ENCODE measurements at regions of chr1 and their contacts with region 1.

Region 1: GRCh38 chr1:208652296-208653160 is 408.3 kb upstream of the PLXNA2 start:
- DNase-seq: peak; percentile 21 to 87 (median 61)
- H3K4me3 ChIP-seq: no peak overlapping the region
- H3K27ac ChIP-seq: no peak overlapping the region
- H3K4me1 ChIP-seq: no peaks in the 10 kb centered on the region
- H3K27me3 ChIP-seq: peaks cover 4% of the 10 kb centered on the region
- CTCF ChIP-seq: peak; percentile 74 to 87 (median 78)
- POLR2A ChIP-seq: no peak

Region 2: DNA sequence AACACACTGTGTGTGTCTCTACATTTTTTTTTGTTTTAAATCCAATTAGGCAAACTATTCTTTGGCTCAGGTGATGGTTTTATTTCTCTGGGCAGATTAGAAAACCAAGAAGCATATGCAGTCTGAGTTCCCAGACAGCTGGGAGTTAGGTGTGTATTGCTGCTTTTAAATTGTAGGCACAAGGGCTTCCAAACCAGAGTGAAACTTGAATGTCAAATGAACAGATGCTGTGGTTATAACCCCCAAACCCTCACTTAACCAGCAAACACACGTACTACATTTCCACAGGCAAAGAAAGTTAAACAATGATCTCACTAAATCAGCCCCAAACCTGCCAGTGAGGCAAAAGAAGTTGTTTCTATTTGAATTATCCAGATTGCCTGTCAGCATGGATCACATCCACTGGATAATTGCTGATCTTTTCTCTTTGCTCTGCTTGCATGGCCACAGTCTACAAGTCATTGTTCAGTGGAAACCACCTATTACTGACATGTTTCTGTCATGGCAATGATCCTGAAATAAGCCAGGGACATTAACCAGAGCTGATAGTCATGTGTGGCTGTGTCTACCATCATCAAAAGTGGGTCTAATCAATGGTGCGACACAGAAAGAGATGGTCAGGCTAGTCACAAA is 168.2 kb after region 1 on chr1:
- intact Hi-C with region 1: no loop called
- DNase-seq: no peak
- H3K4me3 ChIP-seq: no peak overlapping the region
- H3K27ac ChIP-seq: no peak overlapping the region
- H3K4me1 ChIP-seq: no peaks in the 10 kb centered on the region
- H3K27me3 ChIP-seq: no peaks in the 10 kb centered on the region
- CTCF ChIP-seq: no peak
- POLR2A ChIP-seq: no peak

Region 3: DNA sequence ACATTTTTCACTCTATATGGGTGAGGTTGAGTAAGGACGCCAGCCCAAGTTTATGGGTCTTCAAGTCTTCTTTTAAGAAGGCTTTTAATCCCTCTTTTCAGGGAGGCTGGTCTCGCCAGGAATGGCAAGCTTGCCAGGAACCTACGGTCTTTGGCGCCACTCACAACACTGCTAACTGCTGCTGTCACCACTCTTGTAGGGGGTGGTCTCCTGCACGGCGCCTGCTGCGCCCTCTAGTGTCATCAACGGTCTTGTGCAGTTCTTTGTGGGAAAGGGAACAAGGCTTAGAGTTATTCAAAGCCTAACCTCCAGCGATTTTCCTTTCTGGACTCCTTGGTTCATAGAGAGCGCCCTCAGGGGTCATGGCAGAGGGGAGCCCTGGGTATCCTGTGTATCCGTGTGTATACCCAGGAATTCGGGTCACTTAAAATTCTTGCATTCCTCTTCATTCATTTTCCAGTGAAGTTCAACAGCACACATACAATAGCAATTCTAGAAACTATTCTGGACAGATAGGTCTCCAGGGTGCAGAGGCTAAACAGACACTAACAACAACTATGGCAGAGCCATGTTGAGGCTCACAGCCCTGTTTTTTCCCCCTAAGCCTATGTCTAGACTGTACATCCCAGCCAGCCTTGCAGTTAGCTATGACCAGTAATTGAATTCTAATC is 538.2 kb after region 1 on chr1:
- intact Hi-C with region 1: loop called in 1 of 2 experiments (anchors 5 kb)
- DNase-seq: peak; percentile 35 to 79 (median 60)
- H3K4me3 ChIP-seq: no peak overlapping the region
- H3K27ac ChIP-seq: no peak overlapping the region
- H3K4me1 ChIP-seq: no peaks in the 10 kb centered on the region
- H3K27me3 ChIP-seq: no peaks in the 10 kb centered on the region
- CTCF ChIP-seq: peak; percentile 43 to 69 (median 65)
- POLR2A ChIP-seq: no peak

Region 4: GRCh38 chr1:209207701-209208286 is 555.3 kb after region 1 on chr1:
- intact Hi-C with region 1: loop called in 1 of 2 experiments (anchors 5 kb)
- DNase-seq: peak; percentile 33 to 83 (median 64)
- H3K4me3 ChIP-seq: peak overlapping the region in 1 of 4 donors; percentile 11
- H3K27ac ChIP-seq: no peak overlapping the region
- H3K4me1 ChIP-seq: peaks cover 0 to 7% of the 10 kb centered on the region in 2 donors
- H3K27me3 ChIP-seq: peaks cover 18% of the 10 kb centered on the region
- CTCF ChIP-seq: peak; percentile 42 to 70 (median 54)
- POLR2A ChIP-seq: no peak

Region 5: DNA sequence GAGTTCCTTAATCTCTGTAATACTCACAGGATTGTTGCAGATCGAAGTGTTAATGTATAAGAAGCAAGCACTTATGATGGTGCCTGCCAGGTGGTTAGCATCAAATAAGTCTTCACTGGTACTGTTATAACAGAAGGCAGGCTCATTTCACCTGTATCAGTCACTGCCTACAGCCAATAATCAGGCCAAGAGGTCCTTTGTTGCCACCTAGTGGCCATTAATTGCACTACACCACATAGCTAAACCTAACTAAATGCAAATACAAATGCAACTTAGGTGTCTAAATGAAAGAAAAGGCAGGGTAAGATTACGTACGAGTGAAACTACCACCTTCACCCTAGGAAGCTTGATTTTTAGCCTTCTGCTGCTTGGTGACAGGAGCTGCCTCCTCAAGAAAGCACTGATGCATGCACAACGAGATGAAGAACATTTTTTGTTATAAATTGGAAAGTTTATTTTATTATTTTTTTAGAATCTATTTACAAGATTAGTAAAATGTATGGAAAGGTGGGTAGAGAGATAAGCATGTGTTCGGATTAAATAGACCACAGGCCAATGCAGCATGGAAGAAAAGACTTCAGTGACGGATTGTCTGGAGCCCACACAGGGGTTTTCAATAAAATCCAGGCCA is 596.2 kb after region 1 on chr1:
- intact Hi-C with region 1: loop called in 1 of 2 experiments (anchors 5 kb)
- DNase-seq: peak; percentile 23 to 85 (median 56)
- H3K4me3 ChIP-seq: no peak overlapping the region
- H3K27ac ChIP-seq: no peak overlapping the region
- H3K4me1 ChIP-seq: no peaks in the 10 kb centered on the region
- H3K27me3 ChIP-seq: no peaks in the 10 kb centered on the region
- CTCF ChIP-seq: peak; percentile 59 to 95 (median 84)
- POLR2A ChIP-seq: no peak

Measured in adrenal gland (tissue), 19 donors.